Activated CD4-positive, alpha-beta memory T cell treated with anti-CD3 and anti-CD28 coated beads, Interleukin-2, amount 10 ng/mL, durations not matched to agents 7 days and 5 days (primary cell): ENCODE measurements at regions of chr7 and their contacts with region 1.

Region 1: GRCh38 chr7:93231799-93232672 is at the start of gene VPS50:
- DNase-seq: peak; percentile 94
- H3K4me3 Mint-ChIP-seq: peak within 1 kb of the TSS; percentile 90
- H3K27ac Mint-ChIP-seq: peak within 1 kb of the TSS; percentile 85
- H3K4me1 Mint-ChIP-seq: peaks cover 30% of the 10 kb centered on the region
- H3K27me3 Mint-ChIP-seq: no peaks in the 10 kb centered on the region
- total RNA-seq, gene VPS50: 17.0 to 21.5 TPM

Region 2: DNA sequence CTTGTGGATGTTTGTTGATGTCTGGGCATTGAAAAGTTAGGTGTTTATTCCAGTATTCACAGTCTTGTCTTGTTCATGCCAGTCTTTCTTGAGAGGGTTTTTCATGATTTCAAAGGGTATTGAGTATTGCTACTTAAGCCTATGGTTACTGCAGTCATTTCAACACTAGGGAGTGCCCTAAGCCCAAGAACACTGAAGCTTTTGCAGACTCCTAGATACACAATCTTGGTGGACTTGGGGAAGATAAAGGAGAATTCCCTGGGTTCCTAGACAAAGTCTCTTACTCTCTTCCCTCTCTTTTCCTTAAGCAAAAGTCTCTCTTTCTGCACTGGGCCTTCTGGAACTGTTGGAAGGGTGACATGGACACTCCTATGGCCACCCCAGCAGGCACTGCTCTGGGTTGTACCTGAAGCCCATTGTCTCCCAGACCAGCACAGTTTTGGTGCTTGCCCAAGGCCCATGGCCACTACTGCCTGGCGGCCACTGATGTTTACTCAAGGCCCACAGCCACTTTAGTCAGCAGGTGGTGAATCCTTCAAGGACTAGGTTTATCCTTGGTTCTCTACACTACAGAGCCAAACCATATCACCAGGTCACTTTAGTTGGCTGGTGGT is 139.2 kb before region 1 on chr7:
- CTCF ChIA-PET with region 1: interaction called, 11 read pairs
- POLR2A ChIA-PET with region 1: interaction called, 4 read pairs
- DNase-seq: no peak
- H3K4me3 Mint-ChIP-seq: no peak overlapping the region
- H3K27ac Mint-ChIP-seq: no peak overlapping the region
- H3K4me1 Mint-ChIP-seq: no peaks in the 10 kb centered on the region
- H3K27me3 Mint-ChIP-seq: peaks cover 34% of the 10 kb centered on the region

Region 3: GRCh38 chr7:93108003-93108402 is 124.0 kb before region 1 on chr7:
- CTCF ChIA-PET with region 1: no interaction called
- POLR2A ChIA-PET with region 1: no interaction called
- DNase-seq: no peak
- H3K4me3 Mint-ChIP-seq: no peak overlapping the region
- H3K27ac Mint-ChIP-seq: no peak overlapping the region
- H3K4me1 Mint-ChIP-seq: peaks cover 33% of the 10 kb centered on the region
- H3K27me3 Mint-ChIP-seq: no peaks in the 10 kb centered on the region

Region 4: GRCh38 chr7:93245525-93246432 is 13.7 kb after region 1 on chr7:
- CTCF ChIA-PET with region 1: interaction called, 17 read pairs
- POLR2A ChIA-PET with region 1: interaction called, 5 read pairs
- DNase-seq: no peak
- H3K4me3 Mint-ChIP-seq: no peak overlapping the region
- H3K27ac Mint-ChIP-seq: no peak overlapping the region
- H3K4me1 Mint-ChIP-seq: peaks cover 8% of the 10 kb centered on the region
- H3K27me3 Mint-ChIP-seq: no peaks in the 10 kb centered on the region